ENCODE measurements at regions of chr6 and their contacts with region 1.

Region 1: DNA sequence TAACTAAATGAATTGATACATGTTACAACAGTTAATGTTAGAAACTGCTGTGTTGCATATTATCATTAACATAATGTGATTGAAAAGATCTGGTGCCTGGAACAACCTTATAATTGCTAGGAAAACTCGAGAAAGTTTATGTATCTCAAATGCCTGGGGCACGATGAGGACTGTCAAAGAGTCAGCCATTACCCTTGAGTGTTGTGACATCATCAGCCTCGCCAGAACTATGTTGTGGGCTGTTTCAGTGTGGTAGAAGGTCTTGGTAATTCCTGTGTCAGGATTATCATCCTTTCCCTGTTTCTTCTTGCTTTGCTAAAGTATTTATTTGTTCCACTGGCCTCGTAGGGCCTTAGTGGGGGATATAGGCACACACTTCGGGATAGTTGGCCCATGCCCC is 185.1 kb downstream of the DTNBP1 start:
- DNase-seq: no peak
- H3K4me3 ChIP-seq: no peak overlapping the region
- H3K27ac ChIP-seq: no peak overlapping the region
- H3K4me1 ChIP-seq: no peaks in the 10 kb centered on the region
- H3K27me3 ChIP-seq: no peaks in the 10 kb centered on the region
- CTCF ChIP-seq: no peak
- POLR2A ChIP-seq: no peak

Region 2: GRCh38 chr6:14165091-14165490 is 1312.6 kb before region 1 on chr6:
- intact Hi-C with region 1: no loop called
- DNase-seq: no peak
- H3K4me3 ChIP-seq: no peak overlapping the region
- H3K27ac ChIP-seq: no peak overlapping the region
- H3K4me1 ChIP-seq: no peaks in the 10 kb centered on the region
- H3K27me3 ChIP-seq: no peaks in the 10 kb centered on the region
- CTCF ChIP-seq: no peak
- POLR2A ChIP-seq: no peak

Region 3: DNA sequence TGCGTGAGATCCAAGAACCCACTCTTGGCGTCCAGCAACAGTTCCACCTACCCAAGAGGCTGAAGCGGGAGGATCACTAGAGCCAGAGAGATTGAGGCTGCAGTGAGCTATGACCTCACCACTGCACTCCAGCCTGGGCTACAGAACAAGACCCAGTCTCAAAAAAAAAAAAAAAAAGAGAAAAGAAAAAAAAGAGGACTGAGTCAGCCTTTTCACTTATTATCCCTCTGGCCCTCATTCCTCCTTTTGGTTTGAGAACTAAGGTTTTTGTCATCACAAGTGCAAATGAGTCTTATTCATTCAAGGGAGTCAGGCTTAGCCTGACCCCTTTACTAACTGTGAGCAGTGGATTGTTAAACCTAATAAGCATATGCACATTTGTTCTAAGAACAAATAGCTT is 269.8 kb before region 1 on chr6:
- intact Hi-C with region 1: no loop called
- DNase-seq: no peak
- H3K4me3 ChIP-seq: no peak overlapping the region
- H3K27ac ChIP-seq: no peak overlapping the region
- H3K4me1 ChIP-seq: no peaks in the 10 kb centered on the region
- H3K27me3 ChIP-seq: no peaks in the 10 kb centered on the region
- CTCF ChIP-seq: no peak
- POLR2A ChIP-seq: no peak

Region 4: DNA sequence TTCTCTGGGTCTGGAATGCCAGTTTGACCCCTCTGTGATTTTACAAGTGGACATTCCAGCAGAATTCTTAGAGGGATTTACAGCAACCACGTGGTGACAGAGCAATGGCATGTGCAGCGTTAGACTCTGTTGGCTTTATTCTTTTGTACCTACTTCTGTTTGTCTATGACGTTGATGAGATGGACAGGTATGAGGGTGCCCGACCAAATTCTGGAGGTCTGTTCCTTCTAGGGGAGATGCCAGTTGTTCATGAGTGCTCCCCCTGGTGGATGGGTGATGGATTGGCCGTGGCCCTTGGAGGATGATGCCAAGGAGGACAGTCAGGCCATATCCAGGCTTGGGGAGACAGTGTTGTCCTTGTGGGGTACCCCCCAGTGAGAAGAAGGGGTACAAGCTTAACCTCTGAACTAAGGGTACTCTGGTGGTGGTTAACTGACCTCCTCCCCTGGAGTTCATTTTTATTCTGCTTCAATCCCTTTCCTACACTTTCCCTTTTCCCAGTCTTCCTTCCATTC is 13.5 kb before region 1 on chr6:
- intact Hi-C with region 1: loop called (anchors 1 kb)
- DNase-seq: no peak
- H3K4me3 ChIP-seq: no peak overlapping the region
- H3K27ac ChIP-seq: no peak overlapping the region
- H3K4me1 ChIP-seq: no peaks in the 10 kb centered on the region
- H3K27me3 ChIP-seq: no peaks in the 10 kb centered on the region
- CTCF ChIP-seq: peak in 1 of 3 donors; percentile 29
- POLR2A ChIP-seq: no peak